Activated CD4-positive, alpha-beta memory T cell treated with anti-CD3 and anti-CD28 coated beads for 36 hours (primary cell): ENCODE measurements at regions of chr1 and their contacts with region 1.

Region 1: DNA sequence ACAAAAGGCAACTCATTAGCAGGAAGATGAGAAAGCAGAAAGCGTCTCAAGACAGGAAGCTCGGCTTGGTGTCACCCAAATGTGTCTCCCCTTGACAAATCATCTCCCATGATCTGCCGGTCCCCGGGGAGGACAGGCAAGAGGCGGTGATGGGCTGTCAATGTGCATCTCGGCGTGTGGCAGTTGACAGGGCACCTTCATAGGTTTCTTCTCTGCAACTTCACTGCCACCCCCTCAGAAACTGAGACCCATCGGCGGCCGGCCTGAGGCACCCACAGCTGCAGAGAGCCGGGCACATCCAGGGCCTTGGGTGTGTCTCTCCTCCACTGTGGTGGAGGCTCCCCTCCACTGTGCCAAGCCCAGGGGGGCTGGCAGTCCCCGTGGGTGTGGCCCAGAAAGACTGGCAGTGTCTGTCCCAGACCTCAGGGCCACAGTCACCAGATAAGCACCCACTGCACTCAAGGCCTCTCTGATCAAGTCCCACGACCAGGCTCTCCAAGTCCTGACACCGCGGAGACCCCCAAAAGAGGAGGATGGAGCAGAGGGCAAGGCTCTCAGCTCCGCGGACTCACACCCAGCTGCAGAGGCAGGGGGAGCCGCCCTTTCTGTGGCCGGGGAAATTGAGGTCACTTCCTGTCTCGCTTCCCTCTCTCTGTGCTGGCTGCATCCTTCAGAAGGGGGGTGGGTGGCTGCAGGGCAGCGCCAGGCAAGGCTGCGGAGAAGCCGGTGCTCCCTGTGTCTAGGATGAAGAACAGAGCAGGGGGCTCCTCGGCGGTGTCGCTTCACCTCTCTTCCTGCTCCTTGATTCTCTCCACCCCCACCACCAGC is 39.6 kb upstream of the LBR start:
- DNase-seq: peak; percentile 91
- H3K4me3 Mint-ChIP-seq: peak overlapping the region; percentile 92
- H3K27ac Mint-ChIP-seq: peak overlapping the region; percentile 99
- H3K4me1 Mint-ChIP-seq: peaks cover 26% of the 10 kb centered on the region
- H3K27me3 Mint-ChIP-seq: no peaks in the 10 kb centered on the region

Region 2: DNA sequence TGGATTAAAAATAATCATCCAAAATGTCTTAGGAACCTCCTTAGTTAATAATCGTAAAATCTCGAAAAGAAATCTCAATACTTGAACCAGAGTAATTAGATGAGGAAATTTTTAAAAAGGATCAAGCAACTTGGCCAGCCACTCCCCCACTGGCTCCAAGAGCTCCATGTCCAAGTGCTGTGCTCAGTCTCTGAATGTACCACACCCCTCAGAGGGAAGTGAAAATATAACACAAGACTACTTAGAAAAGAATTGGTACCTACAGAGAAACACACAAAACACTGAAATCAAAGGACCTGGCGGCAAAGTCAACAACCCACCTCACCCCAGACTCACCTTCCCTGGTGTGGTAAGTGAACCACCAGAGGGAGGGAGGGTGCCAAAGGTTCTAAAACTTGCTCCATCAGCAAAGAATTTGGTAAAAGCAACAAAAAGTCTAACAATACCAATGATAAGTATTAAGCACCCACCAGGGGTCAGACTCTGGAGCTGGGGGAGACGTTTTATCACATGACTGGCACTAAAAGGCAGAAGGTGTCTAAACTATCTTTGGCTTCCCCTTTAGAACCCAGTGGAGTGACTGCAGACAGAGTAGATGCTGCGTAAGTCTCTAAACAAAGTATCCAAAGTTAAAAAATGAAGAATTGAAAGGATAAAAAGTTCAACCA is 53.6 kb before region 1 on chr1:
- CTCF ChIA-PET with region 1: no interaction called
- POLR2A ChIA-PET with region 1: no interaction called
- intact Hi-C with region 1: no loop called
- DNase-seq: no peak
- H3K4me3 Mint-ChIP-seq: no peak overlapping the region
- H3K27ac Mint-ChIP-seq: no peak overlapping the region
- H3K4me1 Mint-ChIP-seq: peaks cover under 1% of the 10 kb centered on the region
- H3K27me3 Mint-ChIP-seq: no peaks in the 10 kb centered on the region

Region 3: DNA sequence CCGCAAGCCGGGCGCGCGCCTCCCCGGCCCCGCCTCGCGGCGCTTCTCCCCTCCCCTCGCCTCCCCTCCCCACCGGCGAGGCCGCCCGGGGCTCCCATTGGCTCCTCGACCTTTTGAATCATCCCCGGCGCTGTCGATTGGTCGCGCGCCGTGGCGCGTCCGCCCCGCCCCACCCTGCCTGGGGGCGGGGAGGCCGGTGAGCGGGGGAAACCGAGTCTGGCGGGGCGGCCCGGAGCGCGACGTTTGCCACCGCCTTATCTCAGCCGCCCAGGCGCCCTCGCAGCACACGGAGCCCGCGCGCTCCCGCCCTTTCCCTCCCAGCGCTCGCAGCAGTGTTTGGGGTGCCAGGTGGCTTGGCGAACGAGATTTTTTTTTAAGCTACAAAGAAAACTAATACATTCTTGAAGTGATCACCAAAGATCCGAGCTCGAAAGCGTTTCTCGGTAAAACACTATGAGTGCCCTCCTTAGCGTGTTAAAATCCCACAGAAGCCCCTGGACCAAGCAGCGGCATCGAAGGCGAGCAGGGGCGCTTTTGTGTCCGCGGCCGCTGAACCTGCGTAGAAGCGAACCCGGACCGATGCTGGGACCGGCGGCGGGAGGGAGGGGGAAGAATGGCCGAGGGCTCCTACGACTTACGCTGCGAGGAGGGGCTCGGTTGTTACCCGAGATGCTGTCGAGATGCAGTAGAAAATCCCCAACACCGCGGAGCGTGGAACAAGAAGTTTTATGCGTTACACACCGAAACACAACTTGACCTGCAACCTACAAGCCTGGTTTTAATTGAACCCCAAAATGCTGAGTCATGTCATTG is 39.1 kb before region 1 on chr1:
- CTCF ChIA-PET with region 1: interaction called, 3 read pairs
- POLR2A ChIA-PET with region 1: interaction called, 26 read pairs
- intact Hi-C with region 1: loop called (anchors 1 kb)
- DNase-seq: peak; percentile 95
- H3K4me3 Mint-ChIP-seq: peak overlapping the region; percentile 89
- H3K27ac Mint-ChIP-seq: peak overlapping the region; percentile 97
- H3K4me1 Mint-ChIP-seq: peaks cover 44% of the 10 kb centered on the region
- H3K27me3 Mint-ChIP-seq: no peaks in the 10 kb centered on the region

Region 4: GRCh38 chr1:225441314-225442122 is 25.9 kb before region 1 on chr1:
- CTCF ChIA-PET with region 1: interaction called, 7 read pairs
- POLR2A ChIA-PET with region 1: interaction called, 42 read pairs
- intact Hi-C with region 1: loop called (anchors 1 kb)
- DNase-seq: no peak
- H3K4me3 Mint-ChIP-seq: no peak overlapping the region
- H3K27ac Mint-ChIP-seq: peak overlapping the region; percentile 64
- H3K4me1 Mint-ChIP-seq: peaks cover 46% of the 10 kb centered on the region
- H3K27me3 Mint-ChIP-seq: no peaks in the 10 kb centered on the region

Region 5: GRCh38 chr1:225454733-225455132 is 12.7 kb before region 1 on chr1:
- CTCF ChIA-PET with region 1: interaction called, 3 read pairs
- POLR2A ChIA-PET with region 1: interaction called, 16 read pairs
- intact Hi-C with region 1: loop called (anchors 1 kb)
- DNase-seq: peak; percentile 91
- H3K4me3 Mint-ChIP-seq: peak overlapping the region; percentile 16
- H3K27ac Mint-ChIP-seq: peak overlapping the region; percentile 73
- H3K4me1 Mint-ChIP-seq: peaks cover 39% of the 10 kb centered on the region
- H3K27me3 Mint-ChIP-seq: no peaks in the 10 kb centered on the region

Region 6: DNA sequence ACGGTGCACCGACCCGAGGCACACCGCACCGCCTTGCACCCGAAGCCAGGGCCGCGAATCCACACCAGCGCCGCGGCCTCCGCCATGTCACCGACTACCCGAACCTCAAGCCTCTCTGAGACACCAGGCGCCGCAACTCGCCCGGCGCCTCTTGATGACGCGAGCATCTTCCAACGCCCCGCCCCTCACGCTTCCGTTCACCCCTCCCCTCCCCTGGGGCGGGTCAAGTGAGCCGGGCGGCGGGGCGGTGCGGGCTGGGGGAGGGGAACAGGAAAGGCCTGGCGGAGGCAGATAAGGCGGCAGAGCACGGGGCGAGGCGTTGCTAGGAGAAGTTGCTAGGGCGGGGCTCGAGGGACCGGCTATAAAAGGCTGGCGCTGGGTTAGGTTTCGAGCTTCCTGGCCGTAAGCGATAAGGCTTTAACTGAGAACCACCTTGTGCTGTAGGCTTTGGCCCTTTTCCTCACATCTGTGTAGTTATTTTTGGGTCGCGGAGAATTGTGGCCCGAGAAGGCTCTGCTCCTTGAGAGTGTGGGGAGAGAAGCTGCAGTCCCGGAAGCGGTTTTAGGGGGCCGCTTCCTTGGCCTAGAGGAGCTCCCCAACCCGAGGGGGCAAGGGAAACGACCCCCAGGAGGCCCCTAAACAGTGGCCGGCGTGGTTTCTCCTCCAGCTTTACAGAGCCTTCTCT is 532.0 kb after region 1 on chr1 and contains the start of gene SDE2:
- CTCF ChIA-PET with region 1: no interaction called
- POLR2A ChIA-PET with region 1: interaction called, 6 read pairs
- intact Hi-C with region 1: loop called (anchors 5 kb)
- DNase-seq: peak; percentile 100
- H3K4me3 Mint-ChIP-seq: peak within 1 kb of the TSS; percentile 100
- H3K27ac Mint-ChIP-seq: peak within 1 kb of the TSS; percentile 96
- H3K4me1 Mint-ChIP-seq: peaks cover 66% of the 10 kb centered on the region
- H3K27me3 Mint-ChIP-seq: no peaks in the 10 kb centered on the region
- total RNA-seq, gene SDE2: 18.0 to 18.2 TPM

Region 7: DNA sequence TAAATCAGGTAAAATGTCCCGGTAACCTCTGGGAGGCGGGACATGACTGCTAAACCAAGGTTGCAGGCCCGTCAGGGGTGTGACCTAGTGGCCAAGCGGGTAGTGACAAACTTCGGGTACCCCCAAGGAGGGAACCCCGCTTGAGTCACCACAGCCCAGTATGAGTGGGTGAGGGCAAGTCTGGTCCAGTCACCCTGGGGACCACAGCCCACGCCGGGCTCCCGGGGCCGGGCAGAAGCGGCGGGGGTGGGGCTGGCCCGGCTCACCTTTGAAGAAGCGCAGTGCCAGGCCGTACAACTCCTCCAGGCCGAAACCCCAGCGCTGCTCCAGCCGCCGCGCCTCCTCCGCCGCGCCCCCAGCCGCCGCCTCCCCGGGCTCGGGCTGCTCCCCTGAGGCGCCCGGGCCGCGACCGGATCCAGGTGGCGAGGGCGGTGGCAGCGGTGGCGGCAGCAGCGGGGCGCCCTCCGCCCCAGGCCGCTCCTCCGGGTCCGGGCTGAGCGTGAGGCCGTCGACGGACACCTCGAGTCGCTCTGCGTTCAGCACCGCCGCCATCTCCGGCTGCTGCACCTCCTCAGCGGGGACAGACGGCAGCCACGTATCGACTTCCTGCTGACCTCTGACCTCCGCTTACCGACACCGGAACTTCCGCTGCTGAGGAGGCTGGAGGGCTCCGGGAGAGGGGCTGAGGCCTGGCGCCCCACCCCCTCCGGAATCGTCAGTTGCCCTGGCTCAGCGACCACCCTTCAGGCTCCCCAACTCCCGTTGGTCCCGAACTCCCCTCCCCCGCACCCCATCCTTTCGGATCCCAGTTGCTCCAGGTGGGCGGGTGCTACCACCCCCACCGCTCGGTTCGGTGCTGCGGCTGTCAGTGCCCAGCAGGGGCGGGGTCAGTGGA is 719.0 kb after region 1 on chr1 and contains the start of gene ACBD3:
- CTCF ChIA-PET with region 1: no interaction called
- POLR2A ChIA-PET with region 1: no interaction called
- intact Hi-C with region 1: loop called (anchors 2 kb)
- DNase-seq: peak; percentile 91
- H3K4me3 Mint-ChIP-seq: peak within 1 kb of the TSS; percentile 93
- H3K27ac Mint-ChIP-seq: peak within 1 kb of the TSS; percentile 91
- H3K4me1 Mint-ChIP-seq: peaks cover 34% of the 10 kb centered on the region
- H3K27me3 Mint-ChIP-seq: no peaks in the 10 kb centered on the region
- total RNA-seq, gene ACBD3: 18.7 to 20.7 TPM